AG04450 (cell line): ENCODE measurements at regions of chr10 and their contacts with region 1.

Region 1: GRCh38 chr10:57338823-57339558 is 928.7 kb downstream of the IPMK start:
- DNase-seq: no peak
- H3K4me3 ChIP-seq: no peak overlapping the region
- H3K27ac ChIP-seq: no peak overlapping the region
- H3K27me3 ChIP-seq: no peaks in the 10 kb centered on the region
- CTCF ChIP-seq: peak; percentile 71

Region 2: DNA sequence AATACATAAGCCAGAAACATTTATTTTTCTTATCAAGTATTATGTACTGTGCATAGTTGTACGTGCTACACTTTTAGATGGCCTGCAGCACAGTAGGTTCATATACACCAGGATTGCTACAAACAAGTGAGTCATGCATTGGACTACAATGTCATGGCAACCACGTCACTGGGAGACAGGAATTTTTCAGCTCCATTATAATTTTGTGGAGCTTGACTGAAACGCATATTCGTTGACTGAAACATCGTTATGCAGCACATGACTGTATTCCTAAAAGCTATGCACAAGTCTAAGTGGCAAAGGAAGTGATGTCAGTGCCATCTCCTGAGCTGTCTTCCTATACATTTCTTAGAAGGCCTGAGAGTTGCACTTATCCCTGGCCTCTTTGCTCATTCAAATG is 56.9 kb after region 1 on chr10:
- CTCF ChIA-PET with region 1: no interaction called
- POLR2A ChIA-PET with region 1: no interaction called
- DNase-seq: no peak
- H3K4me3 ChIP-seq: no peak overlapping the region
- H3K27ac ChIP-seq: no peak overlapping the region
- H3K27me3 ChIP-seq: no peaks in the 10 kb centered on the region
- CTCF ChIP-seq: no peak

Region 3: GRCh38 chr10:58152673-58153263 is 813.8 kb after region 1 on chr10:
- CTCF ChIA-PET with region 1: interaction called, 28 read pairs
- POLR2A ChIA-PET with region 1: no interaction called
- DNase-seq: peak; percentile 23
- H3K4me3 ChIP-seq: no peak overlapping the region
- H3K27ac ChIP-seq: no peak overlapping the region
- H3K27me3 ChIP-seq: no peaks in the 10 kb centered on the region
- CTCF ChIP-seq: peak; percentile 75